ENCODE measurements at regions of chr1 and their contacts with region 1.

Region 1: DNA sequence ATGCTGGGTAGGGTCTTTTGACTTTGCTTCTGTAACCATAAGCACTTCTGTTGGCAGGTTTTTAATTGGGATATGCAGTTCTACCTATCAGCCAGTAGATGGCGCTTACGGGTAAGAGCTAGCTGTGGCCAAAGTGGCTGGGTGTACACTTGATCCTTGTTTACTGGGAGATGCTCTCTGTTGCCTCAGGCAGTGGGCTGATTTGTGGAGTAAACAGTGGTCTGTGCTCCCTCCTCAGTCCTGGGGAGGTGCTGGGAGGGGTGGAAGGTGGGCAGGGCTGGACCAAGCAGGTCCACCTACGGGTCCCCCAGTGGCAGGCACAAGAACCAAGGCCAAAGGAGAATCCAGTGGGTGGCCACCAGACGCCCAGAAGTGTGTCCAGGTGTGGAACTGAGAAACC is 43.4 kb downstream of the RALGPS2 start:
- H3K4me3 ChIP-seq: no peak overlapping the region
- H3K27ac ChIP-seq: no peak overlapping the region
- H3K4me1 ChIP-seq: no peaks in the 10 kb centered on the region
- CTCF ChIP-seq: peak; percentile 41; the same call in 1 of the 2 replicates

Region 2: DNA sequence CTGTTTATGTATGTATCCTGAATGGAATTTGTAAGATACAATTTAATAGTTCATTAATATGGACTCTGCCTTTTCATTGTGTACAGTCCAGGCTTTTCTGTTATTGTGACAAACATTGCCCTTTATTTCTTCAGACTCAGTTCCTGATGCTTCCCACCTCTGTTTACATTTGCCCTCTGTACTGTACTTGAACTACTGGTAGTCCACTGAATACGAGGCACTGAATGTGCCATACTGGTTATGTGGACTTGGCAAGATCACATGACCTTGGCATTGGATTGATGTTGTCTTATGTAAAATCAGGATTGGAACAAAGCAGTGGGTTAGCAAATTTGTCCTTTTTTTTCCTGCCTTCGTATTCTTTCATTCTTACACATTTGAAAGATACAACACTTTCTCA is 15.5 kb before region 1 on chr1:
- CTCF ChIA-PET with region 1: interaction called, 15 read pairs
- POLR2A ChIA-PET with region 1: no interaction called
- H3K4me3 ChIP-seq: no peak overlapping the region
- H3K27ac ChIP-seq: no peak overlapping the region
- H3K4me1 ChIP-seq: no peaks in the 10 kb centered on the region
- CTCF ChIP-seq: no peak

Region 3: DNA sequence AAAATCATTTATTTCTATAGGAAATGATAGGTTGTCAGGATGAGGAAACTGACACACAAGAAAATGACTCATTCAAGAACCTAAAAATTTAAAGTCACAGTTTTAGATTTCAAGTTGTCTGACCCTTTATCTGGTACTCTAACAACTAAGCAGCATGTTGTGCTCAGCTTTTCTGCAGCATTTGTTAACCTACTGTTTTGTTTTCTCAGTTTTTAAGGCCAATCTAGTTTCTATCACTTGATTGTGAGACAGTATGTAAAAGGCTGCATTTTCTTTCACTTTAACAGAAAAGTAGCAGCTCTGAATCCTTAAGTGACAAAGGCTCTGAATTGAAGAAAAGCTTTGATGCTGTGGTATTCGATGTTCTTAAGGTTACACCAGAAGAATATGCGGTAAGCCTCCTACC is 15.7 kb after region 1 on chr1:
- CTCF ChIA-PET with region 1: interaction called, 13 read pairs
- POLR2A ChIA-PET with region 1: no interaction called
- H3K4me3 ChIP-seq: no peak overlapping the region
- H3K27ac ChIP-seq: no peak overlapping the region
- H3K4me1 ChIP-seq: no peaks in the 10 kb centered on the region
- CTCF ChIP-seq: no peak